ENCODE measurements at regions of chr3 and their contacts with region 1.

Region 1: DNA sequence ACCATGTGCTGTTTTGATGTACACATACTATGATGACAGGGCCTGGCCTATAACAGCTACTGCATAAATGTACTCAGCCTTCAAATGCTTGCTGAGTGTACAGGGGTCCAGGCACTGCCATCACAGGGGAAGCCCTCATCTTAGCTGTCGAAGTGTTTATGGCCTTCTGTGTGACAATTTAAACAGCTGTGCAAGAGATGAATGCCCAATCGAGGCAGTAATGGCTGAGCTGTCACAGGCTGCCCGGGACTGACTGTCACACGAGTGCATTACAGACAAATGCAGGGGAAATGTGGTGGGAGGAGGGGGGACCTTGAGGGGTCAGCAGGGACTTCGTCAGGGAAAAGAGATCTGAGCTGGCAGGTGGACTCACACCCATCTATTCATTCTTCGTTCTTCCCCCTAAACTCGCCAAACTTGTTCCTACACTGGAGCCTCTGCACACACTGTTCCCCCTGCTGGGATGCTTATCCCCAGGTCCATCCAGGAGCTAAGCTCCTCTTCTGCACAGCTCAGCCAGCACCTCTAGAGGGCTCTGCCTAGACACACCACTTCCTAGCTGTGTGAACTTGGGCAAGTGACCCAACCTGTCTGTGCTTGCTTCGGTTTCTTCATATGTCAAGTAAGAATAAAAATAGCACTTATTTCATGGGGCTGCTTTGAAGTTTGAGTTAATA is 156.2 kb upstream of the IQSEC1 start:
- DNase-seq: no peak
- ATAC-seq: no peak

Region 2: DNA sequence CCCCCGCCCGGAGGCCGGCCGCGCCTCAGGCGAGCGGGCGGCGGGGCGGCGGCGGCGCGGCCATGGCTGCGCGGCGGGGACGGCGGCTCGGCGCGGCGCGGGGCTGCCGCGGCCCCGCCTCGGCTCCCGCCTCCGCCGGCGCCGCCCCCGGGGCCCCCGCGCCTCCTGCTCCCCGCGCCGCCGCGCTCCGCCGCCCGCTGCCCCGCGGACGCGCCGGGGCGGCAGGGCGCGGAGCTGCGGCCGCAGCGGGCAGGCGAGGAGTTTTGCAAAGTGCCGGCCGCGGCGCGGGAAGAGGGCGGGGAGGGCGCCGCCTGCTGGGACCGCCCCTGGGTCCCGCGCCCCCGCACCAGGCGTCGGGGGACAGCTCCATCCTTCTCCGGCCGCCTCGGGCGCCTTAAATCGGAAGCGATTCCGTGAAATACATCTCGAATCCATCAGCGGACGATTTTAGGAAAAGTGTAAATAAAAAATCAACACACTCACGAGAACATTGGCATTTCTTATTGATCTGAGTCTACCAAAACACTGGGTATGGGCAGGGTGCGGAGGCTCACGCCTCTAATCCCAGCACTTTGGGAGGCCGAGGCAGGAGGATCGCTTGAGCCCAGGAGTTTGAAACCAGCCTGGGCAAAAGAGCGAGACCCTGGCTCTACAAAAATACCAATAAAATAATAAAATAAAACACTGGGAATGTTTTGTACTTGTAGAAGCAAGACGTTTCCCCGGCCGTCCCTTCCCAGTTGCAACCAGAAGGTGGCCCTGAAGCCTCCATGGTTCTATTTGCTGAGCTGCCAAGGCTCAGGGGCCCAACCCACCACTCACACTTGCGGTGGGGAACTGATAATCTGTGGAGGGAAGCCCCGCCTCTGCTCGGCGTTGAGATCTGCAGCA is 53.8 kb after region 1 on chr3:
- intact Hi-C with region 1: loop called (anchors 5 kb)
- DNase-seq: no peak
- ATAC-seq: peak; percentile 43